OCI-LY7 (cell line): ENCODE measurements at regions of chr6 and their contacts with region 1.

Region 1: GRCh38 chr6:166286839-166287271 is 21.3 kb downstream of the PRR18 start:
- DNase-seq: peak; percentile 94
- H3K4me3 ChIP-seq: peak overlapping the region; percentile 47
- H3K27ac ChIP-seq: peak overlapping the region; percentile 86
- H3K4me1 ChIP-seq: peaks cover 21% of the 10 kb centered on the region
- CTCF ChIP-seq: no peak

Region 2: GRCh38 chr6:166228839-166229528 is 57.9 kb before region 1 on chr6:
- CTCF ChIA-PET with region 1: no interaction called
- POLR2A ChIA-PET with region 1: no interaction called
- intact Hi-C with region 1: loop called (anchors 5 kb)
- DNase-seq: peak; percentile 81
- H3K4me3 ChIP-seq: peak overlapping the region; percentile 45
- H3K27ac ChIP-seq: peak overlapping the region; percentile 68
- H3K4me1 ChIP-seq: peaks cover 45% of the 10 kb centered on the region
- CTCF ChIP-seq: no peak

Region 3: DNA sequence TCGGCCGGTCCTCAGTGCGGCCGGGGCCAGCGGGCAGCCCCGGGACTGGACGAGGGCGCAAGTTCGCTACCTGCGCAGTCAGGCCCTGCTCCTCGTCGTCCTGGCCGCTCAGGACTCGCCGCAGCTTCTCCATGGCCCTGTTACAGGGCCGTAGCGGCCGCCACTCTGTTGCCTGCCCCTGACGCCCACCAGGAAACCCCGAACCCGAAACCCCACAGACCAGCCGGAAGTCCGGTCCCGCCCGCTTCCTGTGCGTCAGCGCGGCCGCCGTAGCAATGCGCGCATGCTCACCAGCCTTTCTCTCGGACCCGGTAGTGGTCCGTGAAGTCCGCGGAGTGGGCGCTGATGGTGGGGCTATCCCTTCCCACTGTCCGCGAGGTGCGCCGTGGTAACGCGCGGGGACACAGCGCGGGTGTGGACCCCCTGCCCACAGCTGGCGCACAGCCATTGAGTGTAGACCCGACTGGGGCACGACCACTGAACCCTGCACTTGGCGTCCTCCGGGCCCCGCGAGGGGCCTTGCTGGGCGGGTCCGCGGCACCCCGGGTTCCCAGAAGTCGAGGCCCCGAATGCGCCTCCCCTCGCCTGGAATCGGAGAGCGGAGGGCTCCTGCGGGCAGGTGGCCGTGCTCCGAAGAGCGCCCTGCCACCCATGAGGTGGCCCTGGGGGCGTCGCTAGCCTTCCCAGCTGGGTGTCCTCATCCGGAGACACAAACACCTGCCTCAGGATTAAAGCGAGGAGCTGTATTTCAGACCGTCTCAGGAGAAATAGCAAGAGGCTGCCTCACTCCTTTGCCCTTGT is 55.7 kb after region 1 on chr6 and contains the start of gene SFT2D1:
- CTCF ChIA-PET with region 1: no interaction called
- POLR2A ChIA-PET with region 1: interaction called, 4 read pairs
- intact Hi-C with region 1: loop called (anchors 1 kb)
- DNase-seq: peak; percentile 90
- H3K4me3 ChIP-seq: peak within 1 kb of the TSS; percentile 97
- H3K27ac ChIP-seq: peak within 1 kb of the TSS; percentile 65
- H3K4me1 ChIP-seq: peaks cover 25% of the 10 kb centered on the region
- CTCF ChIP-seq: no peak
- total RNA-seq, gene SFT2D1: 40.2 and 43.4 TPM in 2 replicates